GM10248 (cell line): ENCODE measurements at regions of chr10 and their contacts with region 1.

Region 1: DNA sequence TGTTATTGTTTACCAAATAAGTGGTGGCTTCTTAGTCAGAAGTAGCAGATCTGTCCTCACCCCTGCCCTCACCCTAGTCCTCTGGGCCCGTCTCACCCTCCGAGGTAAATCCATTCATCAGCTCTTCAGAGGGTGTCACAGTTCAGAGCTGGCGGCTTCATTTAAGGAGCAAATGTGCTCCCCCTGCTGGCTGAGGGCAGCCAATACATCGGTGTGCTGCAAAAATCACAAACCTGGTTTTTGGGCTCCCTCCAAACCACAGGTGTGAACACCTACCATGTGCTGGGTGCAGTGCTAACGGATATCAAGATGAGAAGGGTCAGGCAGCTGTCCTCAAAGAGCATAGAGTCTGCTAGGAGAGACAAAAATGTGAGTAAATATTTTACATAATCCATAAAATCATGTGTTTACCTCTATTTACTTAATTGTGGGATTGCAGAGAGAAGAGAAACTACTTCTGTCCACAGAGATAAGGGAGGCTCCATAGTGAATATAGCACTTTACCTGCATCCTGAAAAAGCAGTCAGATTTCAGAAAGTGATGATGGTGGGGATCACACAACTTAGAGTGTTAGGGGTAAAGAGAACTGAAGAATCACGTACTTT is 15.5 kb upstream of the CRTAC1 start:
- DNase-seq: peak; percentile 71
- CTCF ChIP-seq: peak; percentile 91

Region 2: GRCh38 chr10:97792141-97792721 is 253.7 kb before region 1 on chr10:
- CTCF ChIA-PET with region 1: interaction called, 21 read pairs
- POLR2A ChIA-PET with region 1: no interaction called
- DNase-seq: peak; percentile 82
- CTCF ChIP-seq: peak; percentile 92

Region 3: DNA sequence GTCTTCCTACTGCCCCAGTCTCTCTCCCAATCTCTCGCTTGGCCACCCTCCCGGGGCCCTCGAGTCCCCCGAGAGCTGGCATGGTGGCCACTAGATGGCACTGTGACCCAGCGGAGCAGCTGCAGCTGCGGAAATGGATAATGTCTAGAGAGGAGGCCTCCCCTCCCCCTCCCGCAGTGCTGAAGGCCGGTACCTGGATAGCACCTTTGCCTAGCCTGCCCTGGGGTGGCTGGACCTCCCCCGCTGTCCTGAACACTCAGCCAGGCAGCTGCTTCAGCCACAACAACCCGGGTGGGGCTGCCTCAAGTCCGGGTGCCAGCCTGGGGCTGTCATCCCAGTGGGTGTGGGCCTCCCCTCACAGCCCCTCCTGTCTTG is 131.1 kb before region 1 on chr10:
- CTCF ChIA-PET with region 1: interaction called, 193 read pairs
- POLR2A ChIA-PET with region 1: no interaction called
- DNase-seq: peak; percentile 85
- CTCF ChIP-seq: peak; percentile 89

Region 4: GRCh38 chr10:98028168-98028770 is 17.6 kb before region 1 on chr10:
- CTCF ChIA-PET with region 1: interaction called, 58 read pairs
- POLR2A ChIA-PET with region 1: no interaction called
- DNase-seq: peak; percentile 85
- CTCF ChIP-seq: peak; percentile 66

Region 5: GRCh38 chr10:98062424-98062823 is 16.5 kb after region 1 on chr10:
- CTCF ChIA-PET with region 1: interaction called, 16 read pairs
- POLR2A ChIA-PET with region 1: no interaction called
- DNase-seq: no peak
- CTCF ChIP-seq: no peak

Region 6: GRCh38 chr10:98269072-98269912 is 223.4 kb after region 1 on chr10:
- CTCF ChIA-PET with region 1: no interaction called
- POLR2A ChIA-PET with region 1: no interaction called
- DNase-seq: no peak
- CTCF ChIP-seq: no peak